Activated T-helper 1 cell treated with anti-CD3 and anti-CD28 coated beads, Interleukin-12 subunit alpha, Interleukin-12 subunit beta, Interleukin-2, Interleukin-4 antibody, amounts not matched to agents 30 ng/mL and 10 ng/mL and 1 ng/mL, durations not matched to agents 14 hours and 24 hours and 36 hours (primary cell): ENCODE measurements at regions of chr4 and their contacts with region 1.

Region 1: GRCh38 chr4:87058356-87059073 is 123.7 kb downstream of the AFF1 start:
- DNase-seq: no peak
- H3K4me3 Mint-ChIP-seq: peak overlapping the region; percentile 3
- H3K27ac Mint-ChIP-seq: peak overlapping the region; percentile 82
- H3K4me1 Mint-ChIP-seq: peaks cover 65% of the 10 kb centered on the region
- H3K27me3 Mint-ChIP-seq: no peaks in the 10 kb centered on the region

Region 2: DNA sequence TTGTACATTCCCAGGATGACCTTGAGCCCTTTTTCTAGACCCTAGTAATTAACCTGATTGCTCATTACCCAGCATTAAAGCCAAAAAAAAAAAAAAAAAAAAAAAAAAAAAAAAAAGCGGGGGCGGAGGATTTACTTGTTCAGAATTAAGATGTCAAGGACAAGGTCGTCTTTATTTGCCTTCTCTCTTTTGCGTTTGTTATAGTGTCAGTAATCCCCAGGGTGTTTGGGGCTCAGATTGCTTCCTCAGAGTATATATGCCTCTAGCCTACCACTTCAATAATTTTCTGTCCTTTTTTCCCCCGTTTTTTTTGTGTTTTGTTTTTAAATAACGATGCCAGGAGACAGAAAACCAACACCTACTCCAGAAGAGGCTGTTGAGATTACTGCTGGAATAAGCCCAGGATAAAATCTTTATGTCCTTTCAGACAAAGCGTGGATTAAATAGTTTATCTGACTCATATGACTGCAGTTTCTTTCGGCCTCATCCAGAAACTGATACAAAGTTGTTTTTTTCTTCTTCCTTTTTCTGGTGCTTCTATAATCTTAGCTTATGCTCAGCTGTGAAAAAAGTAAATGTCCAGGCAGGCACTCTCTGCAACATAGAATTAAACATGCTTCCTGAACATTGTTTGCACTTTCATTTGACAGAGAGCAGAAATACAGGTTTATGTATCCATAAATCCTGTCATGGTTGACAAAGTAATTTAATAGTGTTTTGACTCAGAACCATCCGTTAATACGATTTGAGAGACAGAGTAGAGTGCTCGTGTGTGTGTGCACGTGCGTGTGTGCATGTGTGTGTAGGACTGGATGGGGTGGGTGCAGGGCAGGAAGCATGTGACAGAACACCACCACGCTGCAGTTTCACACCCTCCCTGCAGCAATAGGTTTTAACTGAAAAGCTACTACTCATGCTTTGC is 14.9 kb after region 1 on chr4:
- intact Hi-C with region 1: loop called (anchors 1 kb)
- DNase-seq: peak; percentile 20
- H3K4me3 Mint-ChIP-seq: peak overlapping the region; percentile 77
- H3K27ac Mint-ChIP-seq: peak overlapping the region; percentile 78
- H3K4me1 Mint-ChIP-seq: peaks cover 37% of the 10 kb centered on the region
- H3K27me3 Mint-ChIP-seq: no peaks in the 10 kb centered on the region

Region 3: DNA sequence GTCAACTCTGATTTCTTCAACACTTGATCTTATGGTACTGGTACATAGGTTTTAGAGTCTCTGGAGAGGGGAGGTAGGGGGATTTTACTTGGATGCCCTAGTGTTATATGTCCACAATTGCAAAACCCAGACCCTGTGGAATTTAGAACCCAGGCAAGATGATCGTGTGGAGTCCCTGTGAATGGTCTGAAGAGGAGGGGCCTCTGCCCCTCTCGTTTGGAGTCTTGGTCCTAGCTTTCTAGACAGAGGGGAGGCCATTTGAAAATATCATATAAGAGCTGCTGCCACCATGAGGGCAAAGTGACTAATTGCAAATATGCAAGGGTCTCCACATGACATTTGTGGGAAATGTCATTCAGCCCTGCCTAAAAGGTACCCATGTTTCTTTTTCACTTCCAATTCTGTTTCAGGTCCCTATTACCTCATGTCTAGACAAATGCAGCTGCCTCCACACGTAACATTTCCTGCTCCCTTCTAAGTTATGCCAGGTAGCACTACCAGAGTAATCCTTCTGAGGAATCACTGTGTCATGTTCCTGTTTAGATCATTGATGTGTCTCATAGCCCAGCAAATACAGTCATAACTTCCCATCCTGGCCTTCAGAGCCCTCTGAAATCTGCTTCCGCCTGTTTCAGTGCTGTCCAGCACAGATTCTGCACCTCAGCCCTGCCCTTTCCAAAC is 35.1 kb after region 1 on chr4:
- intact Hi-C with region 1: loop called (anchors 2 kb)
- DNase-seq: peak; percentile 22
- H3K4me3 Mint-ChIP-seq: no peak overlapping the region
- H3K27ac Mint-ChIP-seq: peak overlapping the region; percentile 62
- H3K4me1 Mint-ChIP-seq: peaks cover 25% of the 10 kb centered on the region
- H3K27me3 Mint-ChIP-seq: no peaks in the 10 kb centered on the region

Region 4: GRCh38 chr4:87103691-87104187 is 45.2 kb after region 1 on chr4:
- intact Hi-C with region 1: loop called (anchors 1 kb)
- DNase-seq: no peak
- H3K4me3 Mint-ChIP-seq: peak overlapping the region; percentile 19
- H3K27ac Mint-ChIP-seq: peak overlapping the region; percentile 29
- H3K4me1 Mint-ChIP-seq: peaks cover 19% of the 10 kb centered on the region
- H3K27me3 Mint-ChIP-seq: no peaks in the 10 kb centered on the region